ENCODE measurements at regions of chr15 and their contacts with region 1.

Region 1: DNA sequence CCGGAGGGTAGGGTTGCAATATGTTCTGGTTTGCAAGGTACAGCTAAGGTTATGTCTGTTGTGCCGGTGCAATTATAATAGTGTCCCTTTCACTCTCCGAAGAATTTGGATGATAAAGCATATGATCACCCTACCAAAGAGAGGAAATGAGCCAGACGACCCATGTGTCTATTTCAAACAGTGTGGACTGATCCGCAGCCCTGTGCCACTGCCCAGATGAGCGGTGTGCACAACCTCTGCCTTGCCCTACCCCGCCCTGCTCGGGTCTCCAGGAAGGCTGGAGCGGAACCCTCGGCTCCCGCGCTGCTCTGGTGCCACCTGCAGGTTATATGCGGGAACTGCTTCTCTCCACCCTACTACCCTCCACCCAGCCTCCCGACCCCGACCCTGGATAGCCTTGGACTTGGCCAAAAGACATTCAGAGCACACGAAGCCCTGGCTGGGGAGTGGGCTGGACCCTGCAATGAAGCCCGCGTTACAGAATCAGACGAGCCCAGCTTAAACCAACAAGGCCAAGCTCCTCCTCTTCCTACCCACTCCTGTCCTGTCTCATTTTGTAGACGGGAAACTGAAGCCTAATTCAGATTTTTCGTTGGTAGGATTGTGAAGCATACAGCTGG is 68.4 kb upstream of the CHRNB4 start:
- DNase-seq: peak; percentile 42 to 69 (median 47)
- H3K4me3 ChIP-seq: no peak overlapping the region
- H3K4me3 Mint-ChIP-seq: peak overlapping the region in 3 of 7 donors; percentile 27 to 55 (median 54)
- H3K27ac ChIP-seq: no peak overlapping the region
- H3K27ac Mint-ChIP-seq: peak overlapping the region in 1 of 8 donors; percentile 8
- H3K4me1 ChIP-seq: no peaks in the 10 kb centered on the region
- H3K4me1 Mint-ChIP-seq: peaks cover 5 to 7% (median 6%) of the 10 kb centered on the region in 3 donors
- H3K27me3 ChIP-seq: peaks cover 9% of the 10 kb centered on the region
- H3K27me3 Mint-ChIP-seq: peaks cover 7 to 54% of the 10 kb centered on the region in 2 donors

Region 2: GRCh38 chr15:78620527-78621421 is 88.6 kb before region 1 on chr15 and contains the start of gene CHRNA3:
- CTCF ChIA-PET with region 1: interaction called, 10 read pairs
- POLR2A ChIA-PET with region 1: no interaction called
- DNase-seq: no peak
- H3K4me3 ChIP-seq: no peak within 1 kb of the TSS
- H3K4me3 Mint-ChIP-seq: no peak within 1 kb of the TSS
- H3K27ac ChIP-seq: no peak within 1 kb of the TSS
- H3K27ac Mint-ChIP-seq: no peak within 1 kb of the TSS
- H3K4me1 ChIP-seq: no peaks in the 10 kb centered on the region
- H3K4me1 Mint-ChIP-seq: peaks cover 0 to 16% (median 4%) of the 10 kb centered on the region in 3 donors
- H3K27me3 ChIP-seq: peaks cover 16% of the 10 kb centered on the region
- H3K27me3 Mint-ChIP-seq: peaks cover 46 to 56% of the 10 kb centered on the region in 2 donors
- total RNA-seq, gene CHRNA3: not detected

Region 3: GRCh38 chr15:78767331-78767951 is 58.1 kb after region 1 on chr15:
- CTCF ChIA-PET with region 1: no interaction called
- POLR2A ChIA-PET with region 1: no interaction called
- DNase-seq: no peak
- H3K4me3 ChIP-seq: no peak overlapping the region
- H3K4me3 Mint-ChIP-seq: no peak overlapping the region
- H3K27ac ChIP-seq: no peak overlapping the region
- H3K27ac Mint-ChIP-seq: peak overlapping the region in 1 of 8 donors; percentile 47
- H3K4me1 ChIP-seq: peaks cover 2% of the 10 kb centered on the region
- H3K4me1 Mint-ChIP-seq: peaks cover 0 to 4% (median 2%) of the 10 kb centered on the region in 3 donors
- H3K27me3 ChIP-seq: no peaks in the 10 kb centered on the region
- H3K27me3 Mint-ChIP-seq: peaks cover 0 to 3% of the 10 kb centered on the region in 2 donors

Measured in CD8-positive, alpha-beta memory T cell (primary cell).